ENCODE measurements at regions of chr10 and their contacts with region 1.

Region 1: GRCh38 chr10:89312973-89313372 is 11.1 kb downstream of the IFIT2 start:
- DNase-seq: no peak
- H3K4me3 ChIP-seq: no peak overlapping the region
- H3K27ac ChIP-seq: no peak overlapping the region
- H3K4me1 ChIP-seq: no peaks in the 10 kb centered on the region
- CTCF ChIP-seq: no peak

Region 2: DNA sequence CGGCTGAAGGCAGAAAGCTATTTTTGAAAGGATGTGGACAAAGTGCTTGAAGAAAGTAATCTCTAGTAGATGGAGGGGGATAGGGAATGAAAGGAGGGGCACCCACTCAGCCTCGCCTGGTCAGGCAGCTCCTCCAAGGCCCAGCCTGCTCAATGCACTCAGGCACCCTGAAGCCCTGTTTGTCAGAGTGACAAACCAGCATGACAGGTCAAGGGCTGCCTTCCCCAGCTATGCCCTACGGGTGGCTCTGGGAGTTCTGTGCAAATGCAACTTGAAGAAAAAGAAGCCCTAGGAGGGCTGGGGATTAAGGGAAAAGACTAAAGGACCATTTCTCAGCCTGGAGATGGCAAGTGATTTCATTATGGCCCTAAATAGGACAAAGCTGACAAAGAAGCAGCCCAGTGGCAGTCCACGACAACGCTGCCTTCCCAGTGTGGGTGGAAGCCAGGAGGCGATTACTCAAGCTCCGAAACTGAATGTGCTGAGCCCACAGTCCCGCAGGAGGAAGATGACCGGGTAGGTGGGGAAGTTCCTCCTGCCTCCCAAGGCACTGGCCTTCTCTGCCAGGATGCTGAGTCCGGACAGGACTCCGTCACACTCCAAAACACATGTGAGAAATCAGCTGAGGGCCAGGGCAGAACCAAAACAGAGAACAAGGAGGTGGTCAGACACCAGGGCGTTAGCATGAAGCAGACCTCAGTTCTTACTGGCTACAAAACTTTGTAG is 77.7 kb before region 1 on chr10:
- CTCF ChIA-PET with region 1: interaction called, 11 read pairs
- POLR2A ChIA-PET with region 1: no interaction called
- intact Hi-C with region 1: no loop called
- DNase-seq: no peak
- H3K4me3 ChIP-seq: no peak overlapping the region
- H3K27ac ChIP-seq: no peak overlapping the region
- H3K4me1 ChIP-seq: no peaks in the 10 kb centered on the region
- CTCF ChIP-seq: no peak

Region 3: GRCh38 chr10:89391917-89392756 is 79.2 kb after region 1 on chr10 and contains the start of gene IFIT1:
- CTCF ChIA-PET with region 1: no interaction called
- POLR2A ChIA-PET with region 1: no interaction called
- intact Hi-C with region 1: no loop called
- DNase-seq: no peak
- H3K4me3 ChIP-seq: peak within 1 kb of the TSS; percentile 34
- H3K27ac ChIP-seq: no peak within 1 kb of the TSS
- H3K4me1 ChIP-seq: peaks cover 7% of the 10 kb centered on the region
- CTCF ChIP-seq: no peak
- total RNA-seq, gene IFIT1: not detected in 2 replicates

Measured in OCI-LY7 (cell line).